Tibial artery (tissue), 4 donors: ENCODE measurements at regions of chr19 and their contacts with region 1.

Region 1: DNA sequence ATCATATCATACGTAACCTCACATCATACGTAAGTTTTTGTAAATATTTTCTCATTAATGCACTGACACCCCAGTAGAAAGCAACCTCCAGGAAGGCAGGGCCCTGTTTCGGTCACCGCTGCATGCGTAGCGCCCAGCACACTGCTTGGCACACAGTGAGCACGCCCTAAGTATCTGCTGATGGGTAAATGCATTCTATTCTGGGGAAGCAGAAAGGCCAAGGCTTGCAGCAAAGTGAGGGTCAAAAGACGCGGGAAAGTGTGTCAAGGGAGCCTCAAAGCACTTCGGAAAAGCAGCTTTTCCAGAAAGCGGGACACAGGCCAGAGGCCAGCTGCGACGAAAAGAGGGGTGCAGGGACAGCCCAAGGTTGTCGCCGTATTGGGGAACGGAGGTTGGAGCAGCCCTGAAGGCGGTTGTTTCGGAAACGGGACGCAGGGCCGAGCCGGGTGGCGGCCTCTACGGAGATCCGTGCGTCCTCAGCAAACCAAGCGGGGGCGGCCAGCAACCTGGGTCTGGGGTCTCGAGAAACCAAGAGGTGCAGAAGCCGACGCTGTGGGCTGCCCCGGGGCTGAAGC is 435 bp downstream of the SUGP1 start:
- DNase-seq: no peak
- H3K4me3 ChIP-seq: peak overlapping the region; percentile 94 to 98
- H3K27ac ChIP-seq: peak overlapping the region; percentile 92 to 99
- H3K4me1 ChIP-seq: peaks cover 0 to 45% (median 30%) of the 10 kb centered on the region in 4 donors
- H3K27me3 ChIP-seq: no peaks in the 10 kb centered on the region
- CTCF ChIP-seq: no peak

Region 2: GRCh38 chr19:19203012-19203856 is 116.6 kb before region 1 on chr19 and contains the start of gene NR2C2AP:
- intact Hi-C with region 1: loop called (anchors 10 kb)
- DNase-seq: peak; percentile 88 to 95
- H3K4me3 ChIP-seq: peak within 1 kb of the TSS; percentile 60 to 73
- H3K27ac ChIP-seq: peak within 1 kb of the TSS; percentile 69 to 84
- H3K4me1 ChIP-seq: peaks cover 0 to 15% (median 13%) of the 10 kb centered on the region in 4 donors
- H3K27me3 ChIP-seq: peaks cover 0 to 22% of the 10 kb centered on the region in 2 donors
- CTCF ChIP-seq: peak in 1 of 2 experiments; percentile 19

Region 3: GRCh38 chr19:19269952-19270694 is 49.8 kb before region 1 on chr19:
- intact Hi-C with region 1: no loop called
- DNase-seq: no peak
- H3K4me3 ChIP-seq: no peak overlapping the region
- H3K27ac ChIP-seq: no peak overlapping the region
- H3K4me1 ChIP-seq: peaks cover 0 to 13% (median 9%) of the 10 kb centered on the region in 4 donors
- H3K27me3 ChIP-seq: peaks cover 0 to 10% of the 10 kb centered on the region in 2 donors
- CTCF ChIP-seq: no peak